Activated naive CD4-positive, alpha-beta T cell treated with anti-CD3 and anti-CD28 coated beads, Interleukin-2, amount 10 ng/mL, durations not matched to agents 7 days and 5 days (primary cell): ENCODE measurements at regions of chr17 and their contacts with region 1.

Region 1: DNA sequence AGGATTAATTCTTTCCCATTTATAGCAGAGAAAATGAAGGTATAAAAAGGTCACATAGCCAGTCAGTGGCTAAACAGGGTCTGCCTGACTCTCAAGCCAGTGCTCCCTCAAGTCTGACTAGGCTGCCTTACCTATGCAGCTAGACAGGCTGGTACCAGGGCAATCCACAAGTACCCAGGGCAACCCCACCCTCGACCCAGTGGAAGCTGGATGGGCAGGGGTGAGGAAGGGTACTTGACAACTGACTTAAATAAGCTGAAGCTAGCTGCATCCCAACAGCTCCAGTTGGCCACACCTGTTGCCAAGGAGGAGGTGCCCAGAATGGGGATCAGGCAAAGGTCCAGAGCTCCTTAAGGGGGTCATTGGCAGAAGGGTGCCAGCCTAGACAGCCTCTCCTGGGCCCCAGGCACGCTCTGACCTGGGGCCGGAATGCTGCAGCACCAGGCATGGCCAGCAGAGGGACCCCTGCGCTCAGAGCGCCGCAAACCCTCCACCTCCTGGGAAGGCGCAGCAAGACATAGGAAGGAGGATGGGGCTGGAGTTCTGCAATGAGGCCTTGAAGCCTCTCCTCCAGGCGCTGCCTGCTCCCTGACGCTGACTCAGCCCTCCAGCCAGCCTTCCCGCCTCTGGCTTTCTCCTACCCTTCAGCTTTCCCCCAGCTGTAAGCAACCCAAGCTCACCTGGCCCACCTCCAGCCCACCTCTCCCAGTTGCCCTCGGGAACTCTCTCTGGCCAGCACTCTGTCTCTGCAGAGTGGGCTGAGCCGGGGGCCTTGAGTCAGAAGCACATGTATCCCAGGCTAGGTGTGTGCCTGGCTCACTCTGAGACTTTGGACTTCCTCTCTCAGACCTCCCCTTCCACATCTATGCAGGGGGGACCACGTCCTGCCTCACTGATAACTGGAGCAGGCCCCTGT is 28.8 kb downstream of the MPP2 start:
- DNase-seq: peak; percentile 74
- H3K4me3 Mint-ChIP-seq: no peak overlapping the region
- H3K27ac Mint-ChIP-seq: no peak overlapping the region
- H3K4me1 Mint-ChIP-seq: no peaks in the 10 kb centered on the region
- H3K27me3 Mint-ChIP-seq: peaks cover 14% of the 10 kb centered on the region

Region 2: DNA sequence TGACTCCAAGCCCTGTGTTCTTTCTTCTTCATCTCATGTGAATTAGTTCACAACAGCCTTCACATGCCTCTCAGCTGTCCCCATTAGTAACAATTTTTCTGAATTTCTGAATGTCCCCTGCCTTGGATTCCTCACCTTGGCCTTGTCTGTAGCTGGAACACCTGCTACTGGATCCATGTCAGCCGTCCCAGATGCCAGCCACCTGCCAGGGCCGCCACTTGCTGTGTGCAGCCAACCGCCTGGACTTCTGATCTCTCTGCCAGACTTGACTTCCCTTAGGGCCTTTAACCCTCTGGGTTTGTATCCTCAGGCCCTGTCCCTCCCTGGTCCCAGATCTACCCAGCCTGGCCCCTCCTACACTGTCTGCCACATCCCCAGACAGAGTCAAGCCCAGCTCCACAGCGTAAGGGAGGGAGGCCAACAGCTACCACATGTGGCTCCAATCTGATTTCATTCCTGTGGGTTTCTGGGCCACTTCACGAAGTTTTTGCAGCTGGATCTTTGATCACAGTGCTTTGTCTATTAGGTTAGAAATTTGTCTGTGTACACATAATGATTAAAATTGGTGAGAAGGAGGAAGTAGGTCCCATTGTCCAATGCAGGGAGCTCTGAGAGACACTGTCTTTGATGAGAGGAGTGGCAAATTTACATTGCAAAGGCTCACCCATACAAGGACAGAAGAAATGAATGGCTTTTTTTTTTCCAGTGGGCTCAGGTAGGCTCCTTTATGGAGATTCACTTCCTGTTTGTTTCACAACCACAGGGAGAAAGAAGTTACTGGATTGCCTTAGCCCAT is 13.5 kb after region 1 on chr17:
- CTCF ChIA-PET with region 1: interaction called, 31 read pairs
- DNase-seq: no peak
- H3K4me3 Mint-ChIP-seq: no peak overlapping the region
- H3K27ac Mint-ChIP-seq: no peak overlapping the region
- H3K4me1 Mint-ChIP-seq: no peaks in the 10 kb centered on the region
- H3K27me3 Mint-ChIP-seq: peaks cover 19% of the 10 kb centered on the region

Region 3: DNA sequence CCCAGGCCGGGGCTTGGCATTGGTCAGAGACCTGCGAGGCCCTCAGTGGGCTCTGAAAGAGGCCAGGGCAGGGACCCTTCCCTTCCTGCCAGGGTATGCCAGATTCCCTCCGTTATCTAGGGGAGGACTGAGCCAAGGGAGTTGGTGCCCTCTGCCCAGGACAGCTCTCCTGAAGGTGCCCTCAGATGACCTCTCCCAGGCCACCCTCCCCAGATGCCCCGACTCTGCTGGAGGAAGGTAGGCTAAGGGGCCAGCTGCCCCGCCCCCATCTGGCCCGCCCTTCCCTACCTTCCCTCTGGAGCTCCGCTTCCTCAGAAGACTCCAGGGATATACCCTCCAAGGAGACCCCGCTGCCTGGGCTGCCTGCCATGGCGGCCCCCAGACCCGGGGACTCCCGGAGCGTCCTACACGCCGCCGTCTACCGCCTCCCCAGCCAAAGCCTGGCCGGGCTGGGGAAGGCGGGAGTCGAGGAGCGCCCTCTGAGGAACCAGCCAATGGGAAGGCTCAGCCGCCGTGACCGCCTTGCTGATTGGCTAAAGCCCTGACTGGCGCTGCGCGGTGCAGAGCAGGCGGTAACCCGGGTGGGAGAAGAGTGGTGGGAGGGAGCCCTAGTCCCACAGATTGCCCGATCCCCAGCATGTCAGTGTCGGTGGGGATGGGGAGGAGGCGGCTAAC is 21.8 kb after region 1 on chr17:
- CTCF ChIA-PET with region 1: interaction called, 31 read pairs
- DNase-seq: peak; percentile 92
- H3K4me3 Mint-ChIP-seq: peak overlapping the region; percentile 74
- H3K27ac Mint-ChIP-seq: no peak overlapping the region
- H3K4me1 Mint-ChIP-seq: peaks cover 16% of the 10 kb centered on the region
- H3K27me3 Mint-ChIP-seq: peaks cover 78% of the 10 kb centered on the region

Region 4: GRCh38 chr17:43907425-43907981 is 29.0 kb after region 1 on chr17 and contains the start of gene MPP2:
- CTCF ChIA-PET with region 1: interaction called, 31 read pairs
- DNase-seq: peak; percentile 70
- H3K4me3 Mint-ChIP-seq: peak within 1 kb of the TSS; percentile 57
- H3K27ac Mint-ChIP-seq: no peak within 1 kb of the TSS
- H3K4me1 Mint-ChIP-seq: peaks cover 21% of the 10 kb centered on the region
- H3K27me3 Mint-ChIP-seq: peaks cover 75% of the 10 kb centered on the region

Region 5: GRCh38 chr17:43994272-43995149 is 116.0 kb after region 1 on chr17:
- CTCF ChIA-PET with region 1: interaction called, 32 read pairs
- DNase-seq: peak; percentile 76
- H3K4me3 Mint-ChIP-seq: no peak overlapping the region
- H3K27ac Mint-ChIP-seq: no peak overlapping the region
- H3K4me1 Mint-ChIP-seq: no peaks in the 10 kb centered on the region
- H3K27me3 Mint-ChIP-seq: peaks cover 12% of the 10 kb centered on the region

Region 6: GRCh38 chr17:44044067-44044466 is 165.5 kb after region 1 on chr17:
- CTCF ChIA-PET with region 1: interaction called, 12 read pairs
- DNase-seq: no peak
- H3K4me3 Mint-ChIP-seq: no peak overlapping the region
- H3K27ac Mint-ChIP-seq: peak overlapping the region; percentile 33
- H3K4me1 Mint-ChIP-seq: peaks cover 21% of the 10 kb centered on the region
- H3K27me3 Mint-ChIP-seq: no peaks in the 10 kb centered on the region